A673 (cell line): ENCODE measurements at regions of chr2 and their contacts with region 1.

Region 1: DNA sequence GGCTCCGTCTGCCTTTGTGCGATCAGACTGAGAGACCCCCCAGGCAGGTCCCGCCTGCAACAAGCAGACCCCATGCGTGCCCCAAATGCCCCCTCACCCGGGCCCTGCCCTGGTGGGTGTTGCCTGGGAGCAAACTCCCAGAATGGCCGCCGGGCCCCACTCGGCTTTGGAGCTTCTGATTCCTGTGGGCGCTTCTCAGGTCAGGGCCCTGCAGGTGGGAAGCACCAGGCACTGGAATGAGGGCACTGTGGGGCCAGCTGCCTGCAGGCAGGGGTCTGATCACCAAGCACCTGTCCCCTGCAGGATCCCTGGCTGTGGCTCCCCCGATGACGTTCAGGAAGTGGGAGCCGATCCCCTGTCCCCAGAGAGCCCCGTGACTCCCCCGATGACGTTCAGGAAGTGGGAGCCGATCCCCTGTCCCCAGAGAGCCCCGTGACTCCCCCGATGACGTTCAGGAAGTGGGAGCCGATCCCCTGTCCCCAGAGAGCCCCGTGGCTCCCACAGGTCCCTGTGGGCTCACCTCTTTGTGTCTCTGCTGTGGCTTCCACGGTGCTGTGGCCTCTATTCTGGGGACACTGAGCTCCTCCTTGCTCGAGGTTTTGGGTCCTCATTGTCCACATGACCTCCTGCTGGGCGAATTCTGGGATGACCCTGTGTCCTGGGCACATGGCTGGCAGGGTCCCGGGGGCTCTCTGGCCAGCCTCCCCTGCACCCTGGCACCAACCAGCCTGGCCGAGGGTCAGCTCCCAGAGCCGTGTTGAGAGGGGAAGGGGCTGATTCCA is 4.7 kb downstream of the NEU4 start:
- DNase-seq: peak; percentile 86
- H3K4me3 ChIP-seq: no peak overlapping the region
- H3K27ac ChIP-seq: peak overlapping the region; percentile 100
- H3K4me1 ChIP-seq: peaks cover 76% of the 10 kb centered on the region
- H3K27me3 ChIP-seq: no peaks in the 10 kb centered on the region
- CTCF ChIP-seq: no peak

Region 2: DNA sequence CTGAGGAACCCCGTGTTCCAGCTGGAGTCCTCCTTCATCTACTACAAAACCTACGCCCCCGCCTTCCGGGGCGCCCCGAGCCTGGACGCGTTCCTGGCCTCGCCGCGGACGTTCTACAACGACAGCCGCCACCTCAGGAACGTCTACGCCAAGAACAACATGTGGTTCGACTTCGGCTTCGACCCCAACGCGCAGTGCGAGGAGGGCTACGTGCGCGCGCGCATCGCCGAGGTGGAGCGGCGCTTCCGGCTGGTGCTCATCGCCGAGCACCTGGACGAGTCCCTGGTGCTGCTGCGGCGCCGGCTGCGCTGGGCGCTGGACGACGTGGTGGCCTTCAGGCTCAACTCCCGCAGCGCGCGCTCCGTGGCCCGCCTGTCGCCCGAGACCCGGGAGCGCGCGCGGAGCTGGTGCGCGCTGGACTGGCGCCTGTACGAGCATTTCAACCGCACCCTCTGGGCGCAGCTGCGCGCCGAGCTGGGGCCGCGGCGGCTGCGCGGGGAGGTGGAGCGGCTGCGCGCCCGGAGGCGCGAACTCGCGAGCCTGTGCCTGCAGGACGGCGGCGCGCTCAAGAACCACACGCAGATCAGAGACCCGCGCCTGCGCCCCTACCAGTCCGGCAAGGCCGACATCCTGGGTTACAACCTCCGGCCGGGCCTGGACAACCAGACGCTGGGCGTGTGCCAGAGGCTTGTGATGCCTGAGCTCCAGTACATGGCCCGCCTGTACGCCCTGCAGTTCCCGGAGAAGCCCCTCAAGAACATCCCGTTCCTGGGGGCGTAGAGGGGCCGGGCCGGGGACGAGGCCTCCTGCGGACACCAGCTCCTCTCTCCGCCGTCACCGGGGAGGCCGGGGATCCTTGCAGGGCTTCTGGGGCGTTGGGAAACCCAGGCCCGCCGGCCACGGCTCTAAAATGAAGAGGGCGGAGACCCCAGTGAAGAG is 10.0 kb before region 1 on chr2:
- CTCF ChIA-PET with region 1: no interaction called
- POLR2A ChIA-PET with region 1: interaction called, 10 read pairs
- intact Hi-C with region 1: no loop called
- DNase-seq: peak; percentile 80
- H3K4me3 ChIP-seq: peak overlapping the region; percentile 56
- H3K27ac ChIP-seq: peak overlapping the region; percentile 98
- H3K4me1 ChIP-seq: peaks cover 33% of the 10 kb centered on the region
- H3K27me3 ChIP-seq: no peaks in the 10 kb centered on the region
- CTCF ChIP-seq: no peak

Region 3: GRCh38 chr2:241859436-241860183 is 45.9 kb after region 1 on chr2:
- CTCF ChIA-PET with region 1: no interaction called
- POLR2A ChIA-PET with region 1: no interaction called
- intact Hi-C with region 1: loop called (anchors 5 kb)
- DNase-seq: peak; percentile 48
- H3K4me3 ChIP-seq: no peak overlapping the region
- H3K27ac ChIP-seq: peak overlapping the region; percentile 62
- H3K4me1 ChIP-seq: peaks cover 37% of the 10 kb centered on the region
- H3K27me3 ChIP-seq: no peaks in the 10 kb centered on the region
- CTCF ChIP-seq: no peak; the same call in 1 of the 2 replicates